T-cell (primary cell): ENCODE measurements at regions of chr12 and their contacts with region 1.

Region 1: DNA sequence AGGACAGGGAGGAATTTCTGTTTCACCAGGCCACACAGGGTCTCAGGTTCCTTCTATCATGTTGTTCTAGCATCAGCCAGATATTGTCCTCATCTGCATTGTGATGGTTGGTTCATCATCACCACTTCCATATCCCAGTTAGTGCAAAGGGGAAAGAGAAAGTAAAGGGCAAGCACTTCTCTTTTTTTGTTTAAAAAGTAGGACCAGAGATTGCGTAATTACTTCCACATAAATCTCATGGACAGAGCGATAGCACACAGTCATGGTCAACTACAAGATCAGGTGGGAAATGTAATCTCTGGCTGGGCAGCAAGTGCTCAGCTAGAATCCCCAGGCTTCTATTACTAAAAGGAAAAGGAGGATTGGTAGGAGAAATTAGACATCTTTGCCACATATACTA is 155.1 kb downstream of the KIF21A start:
- DNase-seq: no peak
- ATAC-seq: no peak
- H3K4me3 ChIP-seq: no peak overlapping the region
- H3K4me3 Mint-ChIP-seq: no peak overlapping the region
- H3K27ac ChIP-seq: no peak overlapping the region
- H3K27ac Mint-ChIP-seq: no peak overlapping the region
- H3K4me1 ChIP-seq: no peaks in the 10 kb centered on the region
- H3K4me1 Mint-ChIP-seq: no peaks in the 10 kb centered on the region
- H3K27me3 ChIP-seq: no peaks in the 10 kb centered on the region
- H3K27me3 Mint-ChIP-seq: no peaks in the 10 kb centered on the region

Region 2: GRCh38 chr12:39252628-39253027 is 35.2 kb before region 1 on chr12:
- CTCF ChIA-PET with region 1: no interaction called
- POLR2A ChIA-PET with region 1: no interaction called
- DNase-seq: no peak
- ATAC-seq: no peak
- H3K4me3 ChIP-seq: no peak overlapping the region
- H3K4me3 Mint-ChIP-seq: no peak overlapping the region
- H3K27ac ChIP-seq: no peak overlapping the region
- H3K27ac Mint-ChIP-seq: no peak overlapping the region
- H3K4me1 ChIP-seq: no peaks in the 10 kb centered on the region
- H3K4me1 Mint-ChIP-seq: no peaks in the 10 kb centered on the region
- H3K27me3 ChIP-seq: peaks cover 0 to 7% of the 10 kb centered on the region in 2 experiments
- H3K27me3 Mint-ChIP-seq: peaks cover under 1 to 5% of the 10 kb centered on the region in 2 donors

Region 3: GRCh38 chr12:39272871-39273770 is 14.7 kb before region 1 on chr12:
- CTCF ChIA-PET with region 1: interaction called, 8 to 11 read pairs
- POLR2A ChIA-PET with region 1: no interaction called
- DNase-seq: peak in 9 of 35 experiments; percentile 1 to 48 (median 3)
- ATAC-seq: no peak
- H3K4me3 ChIP-seq: no peak overlapping the region
- H3K4me3 Mint-ChIP-seq: no peak overlapping the region
- H3K27ac ChIP-seq: no peak overlapping the region
- H3K27ac Mint-ChIP-seq: no peak overlapping the region
- H3K4me1 ChIP-seq: no peaks in the 10 kb centered on the region
- H3K4me1 Mint-ChIP-seq: peaks cover 0 to 2% (median 0%) of the 10 kb centered on the region in 3 donors
- H3K27me3 ChIP-seq: peaks cover 0 to 2% of the 10 kb centered on the region in 2 experiments
- H3K27me3 Mint-ChIP-seq: peaks cover 16 to 17% of the 10 kb centered on the region in 2 donors